Endothelial cell of umbilical vein (primary cell): ENCODE measurements at regions of chr6 and their contacts with region 1.

Region 1: DNA sequence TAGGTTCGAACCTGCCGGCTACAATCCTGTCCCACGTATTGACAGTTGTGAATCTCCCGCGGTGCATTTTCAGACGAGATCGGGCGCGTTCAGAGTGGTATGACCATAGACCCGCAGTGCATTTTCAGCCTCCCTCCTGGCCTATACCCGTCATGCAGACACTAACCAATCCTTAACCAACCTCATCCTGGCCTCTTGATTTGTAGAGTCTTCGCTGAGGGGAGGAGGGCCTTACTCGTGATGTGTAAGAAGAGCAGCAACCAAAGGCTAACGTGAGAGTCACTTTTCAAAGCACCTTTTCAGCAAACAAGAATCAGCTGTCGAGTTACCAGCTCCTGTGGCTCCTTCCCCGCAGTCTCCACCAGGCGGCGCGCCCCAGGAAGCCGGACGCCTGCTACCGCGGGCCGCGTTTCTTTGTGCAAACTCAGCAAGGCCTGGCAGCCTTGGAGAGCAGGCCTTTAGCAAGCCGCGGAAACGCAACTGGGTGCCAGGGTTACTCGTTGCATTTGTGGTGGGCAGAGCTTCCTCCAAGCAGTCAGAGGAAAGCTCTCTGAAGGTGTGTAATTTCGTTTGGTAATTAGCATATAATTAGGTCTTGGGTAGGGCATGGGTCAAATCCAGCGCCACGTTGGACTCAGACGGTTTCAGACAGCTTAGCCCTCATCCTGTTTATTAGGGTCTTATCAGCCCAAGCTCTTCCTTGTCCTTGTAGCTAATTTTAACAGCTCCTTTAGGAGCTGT is 139.8 kb downstream of the OR2B2 start:
- DNase-seq: peak; percentile 77
- H3K4me3 ChIP-seq: no peak overlapping the region
- H3K27ac ChIP-seq: no peak overlapping the region
- H3K4me1 ChIP-seq: peaks cover 2% of the 10 kb centered on the region
- H3K27me3 ChIP-seq: peaks cover 16 to 20% of the 10 kb centered on the region in 2 experiments
- CTCF ChIP-seq: peak; percentile 92 to 99
- POLR2A ChIP-seq: no peak

Region 2: DNA sequence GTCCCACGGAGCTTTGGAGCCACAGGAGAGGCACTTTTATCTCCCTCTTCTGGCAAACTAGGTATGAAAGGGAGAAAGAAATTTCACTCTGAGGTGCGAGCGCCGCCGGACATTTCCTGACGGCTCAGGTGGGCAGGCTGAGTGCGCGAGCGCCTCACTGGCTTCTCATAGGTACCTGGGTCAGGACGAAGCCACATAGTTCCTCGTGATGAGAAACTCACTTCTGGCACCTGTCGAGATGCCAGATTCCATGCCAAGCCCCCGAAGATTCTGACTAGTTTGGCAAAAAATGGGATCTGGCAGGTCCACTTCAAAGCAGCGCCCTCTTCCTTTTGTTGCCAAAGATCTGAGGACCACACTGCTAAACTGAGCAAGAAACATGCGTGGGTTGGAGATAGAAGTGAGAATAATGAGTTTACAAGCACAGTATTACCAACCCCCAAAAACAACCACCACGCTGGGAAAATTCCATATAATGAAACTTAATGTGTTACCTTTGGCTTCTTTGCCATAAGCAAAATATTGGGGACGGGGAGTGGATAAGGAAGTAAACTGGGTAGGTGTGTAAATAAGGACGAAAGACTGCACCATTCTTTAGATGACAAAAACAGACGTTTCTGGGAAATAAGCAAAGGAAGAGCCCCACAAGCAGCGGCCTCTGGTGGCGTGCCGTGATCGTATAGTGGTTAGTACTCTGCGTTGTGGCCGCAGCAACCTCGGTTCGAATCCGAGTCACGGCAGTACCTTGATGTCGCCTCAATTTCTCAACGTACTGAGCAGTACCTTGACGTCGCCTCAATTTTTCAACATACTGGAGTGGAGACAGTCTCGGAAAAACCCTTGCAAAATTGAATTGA is 614.7 kb before region 1 on chr6:
- CTCF ChIA-PET with region 1: interaction called, 10 read pairs
- POLR2A ChIA-PET with region 1: no interaction called
- dilution Hi-C with region 1: no loop called
- intact Hi-C with region 1: no loop called
- DNase-seq: peak; percentile 57
- H3K4me3 ChIP-seq: peak overlapping the region; percentile 30 to 64 (median 59)
- H3K27ac ChIP-seq: no peak overlapping the region
- H3K4me1 ChIP-seq: peaks cover 10% of the 10 kb centered on the region
- H3K27me3 ChIP-seq: peaks cover 8 to 11% of the 10 kb centered on the region in 2 experiments
- CTCF ChIP-seq: peak; percentile 42 to 63
- POLR2A ChIP-seq: no peak

Region 3: DNA sequence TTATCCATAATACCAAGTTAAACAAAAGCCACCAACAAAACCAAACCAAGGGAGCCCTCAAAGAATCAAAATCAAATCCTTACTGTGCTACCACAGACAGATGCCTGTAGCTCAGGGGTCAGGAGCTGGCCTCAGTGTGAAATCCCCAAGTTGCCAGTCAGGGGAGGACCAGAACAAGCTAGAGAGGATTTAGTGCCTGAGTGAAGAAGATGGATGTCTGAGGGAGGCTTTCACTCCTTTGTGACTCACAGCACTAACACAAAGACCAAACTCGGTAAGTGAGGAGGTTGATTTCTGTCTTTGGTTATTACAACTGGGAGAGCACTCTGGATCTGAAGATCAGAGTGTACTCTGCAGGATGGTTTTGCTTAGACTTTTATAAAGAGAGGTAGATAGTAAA is 109.7 kb before region 1 on chr6:
- CTCF ChIA-PET with region 1: no interaction called
- POLR2A ChIA-PET with region 1: no interaction called
- dilution Hi-C with region 1: no loop called
- intact Hi-C with region 1: no loop called
- DNase-seq: no peak
- H3K4me3 ChIP-seq: no peak overlapping the region
- H3K27ac ChIP-seq: no peak overlapping the region
- H3K4me1 ChIP-seq: peaks cover 3% of the 10 kb centered on the region
- H3K27me3 ChIP-seq: peaks cover 10 to 13% of the 10 kb centered on the region in 2 experiments
- CTCF ChIP-seq: no peak
- POLR2A ChIP-seq: no peak

Region 4: DNA sequence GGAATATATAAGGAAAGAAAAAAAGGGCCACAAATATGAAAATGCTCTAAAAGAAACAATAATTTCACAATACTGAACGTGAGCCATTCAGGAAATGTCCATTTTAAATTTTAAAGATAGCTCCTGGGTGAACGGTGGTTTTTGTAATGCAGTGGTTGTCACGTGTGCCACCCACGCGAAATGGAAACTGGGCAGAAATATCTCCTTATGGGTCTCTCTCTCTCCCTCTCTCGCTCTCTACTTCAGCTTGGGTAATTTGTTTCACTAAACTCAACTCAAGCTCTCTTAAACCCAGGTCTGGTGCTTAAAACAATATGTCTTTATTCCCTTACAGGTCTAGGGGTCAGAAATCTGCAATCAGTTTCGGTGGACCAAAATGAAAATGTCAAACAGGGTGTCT is 11.0 kb before region 1 on chr6:
- CTCF ChIA-PET with region 1: interaction called, 58 read pairs
- POLR2A ChIA-PET with region 1: no interaction called
- dilution Hi-C with region 1: no loop called
- intact Hi-C with region 1: no loop called
- DNase-seq: no peak
- H3K4me3 ChIP-seq: no peak overlapping the region
- H3K27ac ChIP-seq: no peak overlapping the region
- H3K4me1 ChIP-seq: no peaks in the 10 kb centered on the region
- H3K27me3 ChIP-seq: peaks cover 30% of the 10 kb centered on the region in 2 experiments
- CTCF ChIP-seq: no peak
- POLR2A ChIP-seq: no peak

Region 5: GRCh38 chr6:27785294-27785693 is 12.9 kb after region 1 on chr6:
- CTCF ChIA-PET with region 1: interaction called, 30 read pairs
- POLR2A ChIA-PET with region 1: interaction called, 3 read pairs
- dilution Hi-C with region 1: no loop called
- intact Hi-C with region 1: no loop called
- DNase-seq: no peak
- H3K4me3 ChIP-seq: no peak overlapping the region
- H3K27ac ChIP-seq: no peak overlapping the region
- H3K4me1 ChIP-seq: no peaks in the 10 kb centered on the region
- H3K27me3 ChIP-seq: peaks cover 18 to 19% of the 10 kb centered on the region in 2 experiments
- CTCF ChIP-seq: no peak
- POLR2A ChIP-seq: no peak